Transverse colon (tissue), 4 donors: ENCODE measurements at regions of chr19 and their contacts with region 1.

Region 1: DNA sequence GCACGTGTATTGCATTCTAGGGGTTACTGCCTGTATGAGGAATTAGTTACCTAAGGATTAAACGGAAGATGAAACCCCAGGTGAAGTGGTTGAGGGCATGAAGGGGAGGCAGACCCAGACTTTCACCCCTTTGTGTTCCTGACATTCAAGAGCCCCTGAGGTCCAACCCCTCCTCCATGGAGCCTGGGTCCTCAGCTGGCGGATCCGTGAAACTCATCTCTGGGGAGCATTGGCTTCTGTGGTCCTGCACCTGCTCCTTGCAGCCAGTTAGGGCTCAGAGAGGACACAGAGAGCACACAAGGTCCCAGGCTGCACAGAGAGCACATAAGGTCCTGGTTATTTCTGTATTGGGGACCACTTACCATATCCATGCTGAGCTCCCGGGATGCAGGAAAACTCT is 7.0 kb upstream of the LILRA1 start:
- DNase-seq: no peak
- H3K4me3 ChIP-seq: no peak overlapping the region
- H3K27ac ChIP-seq: no peak overlapping the region
- H3K4me1 ChIP-seq: no peaks in the 10 kb centered on the region
- H3K27me3 ChIP-seq: no peaks in the 10 kb centered on the region
- CTCF ChIP-seq: no peak
- EP300 ChIP-seq: no peak
- POLR2A ChIP-seq: no peak

Region 2: GRCh38 chr19:54281007-54281728 is 305.2 kb before region 1 on chr19 and contains the start of gene LILRB2:
- in situ Hi-C with region 1: loop called in 1 of 4 experiments (anchors 5 kb)
- intact Hi-C with region 1: no loop called
- DNase-seq: no peak
- H3K4me3 ChIP-seq: no peak within 1 kb of the TSS
- H3K27ac ChIP-seq: peak within 1 kb of the TSS in 3 of 4 donors; percentile 20 to 30 (median 29)
- H3K4me1 ChIP-seq: no peaks in the 10 kb centered on the region
- H3K27me3 ChIP-seq: no peaks in the 10 kb centered on the region
- CTCF ChIP-seq: no peak
- EP300 ChIP-seq: no peak
- POLR2A ChIP-seq: no peak
- total RNA-seq, gene LILRB2: 1.6 to 3.4 (median 2.1) TPM

Region 3: DNA sequence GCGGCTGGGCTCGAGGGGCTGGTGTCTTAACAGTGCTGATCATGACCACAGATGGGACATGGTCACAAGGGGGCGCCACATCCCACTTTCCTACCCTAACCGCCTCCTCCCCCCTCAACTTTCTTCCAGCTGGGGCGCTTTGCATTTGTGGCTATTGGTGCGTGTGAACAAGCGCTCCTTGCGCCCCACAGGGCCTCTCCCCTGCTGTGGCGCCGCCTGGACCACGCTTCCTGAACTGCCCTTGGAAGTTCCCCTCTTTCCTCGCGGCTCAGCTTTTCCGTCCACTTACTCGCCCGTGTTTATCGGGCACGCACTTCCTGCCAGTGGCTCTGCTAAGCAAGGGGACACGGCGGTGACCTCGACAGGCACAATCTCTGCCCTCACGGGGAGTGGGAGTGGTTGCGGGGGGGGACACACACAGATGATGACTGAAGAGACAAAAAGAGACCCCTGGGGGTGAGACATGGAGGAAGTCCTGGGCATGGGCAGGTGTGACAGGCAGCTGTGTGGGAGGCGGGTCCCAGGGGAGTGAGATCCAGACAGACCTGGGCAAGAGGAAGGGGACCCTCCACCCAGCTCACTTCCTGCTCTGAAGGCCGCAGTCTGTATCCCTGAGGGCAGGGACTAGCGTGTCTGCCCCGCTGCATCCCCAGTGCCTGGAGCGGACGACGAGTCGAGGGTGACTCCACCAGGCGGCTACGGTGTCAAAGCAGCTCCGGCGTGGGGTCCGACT is 1494.4 kb after region 1 on chr19:
- in situ Hi-C with region 1: no loop called
- intact Hi-C with region 1: no loop called
- DNase-seq: peak; percentile 85
- H3K4me3 ChIP-seq: peak overlapping the region in 3 of 4 donors; percentile 8 to 53 (median 33)
- H3K27ac ChIP-seq: no peak overlapping the region
- H3K4me1 ChIP-seq: peaks cover 0 to 12% (median 8%) of the 10 kb centered on the region in 4 donors
- H3K27me3 ChIP-seq: peaks cover 8% of the 10 kb centered on the region
- CTCF ChIP-seq: peak; percentile 27 to 63 (median 53)
- EP300 ChIP-seq: no peak
- POLR2A ChIP-seq: no peak